ENCODE measurements at regions of chr17 and their contacts with region 1.

Region 1: GRCh38 chr17:41548844-41549595 is 20.9 kb upstream of the KRT19 start:
- DNase-seq: peak; percentile 72 to 90 (median 84)
- ATAC-seq: peak; percentile 87
- H3K4me3 ChIP-seq: peak overlapping the region; percentile 11 to 40
- H3K4me3 Mint-ChIP-seq: peak overlapping the region; percentile 54
- H3K27ac ChIP-seq: no peak overlapping the region
- H3K27ac Mint-ChIP-seq: no peak overlapping the region
- H3K4me1 ChIP-seq: peaks cover 14% of the 10 kb centered on the region
- H3K4me1 Mint-ChIP-seq: peaks cover 8% of the 10 kb centered on the region
- H3K27me3 ChIP-seq: no peaks in the 10 kb centered on the region
- H3K27me3 Mint-ChIP-seq: peaks cover 13% of the 10 kb centered on the region
- CTCF ChIP-seq: peak; percentile 82

Region 2: DNA sequence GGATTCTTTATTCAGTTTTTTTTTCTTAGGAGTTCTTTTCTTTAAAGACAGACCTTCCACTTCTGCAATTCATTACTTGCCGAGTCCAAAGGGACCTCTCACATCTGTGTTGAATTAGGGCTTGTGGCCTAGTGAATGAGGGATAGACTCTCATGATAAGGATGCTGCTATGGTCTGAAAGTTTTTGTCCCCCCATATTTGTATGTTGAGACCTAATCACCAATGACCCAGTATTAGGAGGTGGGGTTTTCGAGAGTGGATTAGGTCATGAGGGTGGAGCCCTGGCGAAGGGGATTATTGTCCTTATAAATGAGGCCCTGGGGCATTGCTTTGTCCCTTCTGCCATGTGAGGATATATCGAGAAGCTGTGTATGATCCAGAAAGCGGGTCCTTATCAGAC is 691.5 kb before region 1 on chr17:
- CTCF ChIA-PET with region 1: interaction called, 20 read pairs
- POLR2A ChIA-PET with region 1: no interaction called
- intact Hi-C with region 1: loop called (anchors 2 kb)
- DNase-seq: no peak
- ATAC-seq: no peak
- H3K4me3 ChIP-seq: no peak overlapping the region
- H3K4me3 Mint-ChIP-seq: no peak overlapping the region
- H3K27ac ChIP-seq: no peak overlapping the region
- H3K27ac Mint-ChIP-seq: no peak overlapping the region
- H3K4me1 ChIP-seq: no peaks in the 10 kb centered on the region
- H3K4me1 Mint-ChIP-seq: peaks cover 2% of the 10 kb centered on the region
- H3K27me3 ChIP-seq: no peaks in the 10 kb centered on the region
- H3K27me3 Mint-ChIP-seq: peaks cover 17% of the 10 kb centered on the region
- CTCF ChIP-seq: no peak

Region 3: GRCh38 chr17:40909351-40909750 is 639.7 kb before region 1 on chr17:
- CTCF ChIA-PET with region 1: interaction called, 59 read pairs
- POLR2A ChIA-PET with region 1: no interaction called
- intact Hi-C with region 1: loop called (anchors 1 kb)
- DNase-seq: peak; percentile 33 to 81 (median 66)
- ATAC-seq: peak; percentile 88
- H3K4me3 ChIP-seq: no peak overlapping the region
- H3K4me3 Mint-ChIP-seq: no peak overlapping the region
- H3K27ac ChIP-seq: no peak overlapping the region
- H3K27ac Mint-ChIP-seq: no peak overlapping the region
- H3K4me1 ChIP-seq: no peaks in the 10 kb centered on the region
- H3K4me1 Mint-ChIP-seq: no peaks in the 10 kb centered on the region
- H3K27me3 ChIP-seq: peaks cover 0 to 5% of the 10 kb centered on the region in 2 experiments
- H3K27me3 Mint-ChIP-seq: peaks cover 35% of the 10 kb centered on the region
- CTCF ChIP-seq: peak; percentile 82

Region 4: DNA sequence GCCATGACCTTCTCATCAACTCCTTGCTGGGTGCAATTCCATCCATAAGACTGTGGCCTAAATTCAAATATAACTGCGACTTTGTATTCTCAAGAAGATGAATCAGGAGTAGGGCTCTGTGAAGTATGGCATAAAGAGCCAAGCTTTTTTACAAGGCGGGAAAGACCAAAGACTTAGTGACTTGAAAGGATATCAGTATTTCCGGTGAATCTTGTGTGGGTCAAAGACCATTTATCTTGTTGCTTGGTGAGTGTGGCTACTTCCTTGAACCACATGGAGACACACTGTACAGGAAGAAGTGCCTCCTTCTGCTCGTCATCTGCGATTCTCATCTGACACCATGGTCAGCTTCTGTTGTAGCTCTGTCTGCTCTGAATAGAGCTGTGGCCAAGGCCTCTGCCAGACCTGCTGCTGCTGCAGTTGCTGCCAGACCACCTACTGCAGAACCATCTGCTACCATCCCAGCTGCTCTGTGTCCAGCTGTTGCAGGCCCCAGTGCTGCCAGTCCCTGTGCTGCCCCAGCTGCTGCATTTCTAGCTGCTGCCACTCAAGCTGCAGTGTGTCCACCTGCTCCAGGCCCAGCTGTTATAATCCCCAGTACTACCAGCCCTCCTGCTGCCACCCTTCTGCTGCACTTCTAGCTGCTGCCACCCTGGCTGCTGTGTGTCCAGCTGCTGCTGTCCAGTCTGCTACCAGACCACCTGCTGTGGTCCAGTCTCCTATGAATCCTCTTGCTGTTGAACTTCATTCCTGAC is 477.2 kb before region 1 on chr17:
- CTCF ChIA-PET with region 1: no interaction called
- POLR2A ChIA-PET with region 1: no interaction called
- intact Hi-C with region 1: loop called in 1 of 2 experiments (anchors 5 kb)
- DNase-seq: no peak
- ATAC-seq: no peak
- H3K4me3 ChIP-seq: no peak overlapping the region
- H3K4me3 Mint-ChIP-seq: no peak overlapping the region
- H3K27ac ChIP-seq: no peak overlapping the region
- H3K27ac Mint-ChIP-seq: no peak overlapping the region
- H3K4me1 ChIP-seq: no peaks in the 10 kb centered on the region
- H3K4me1 Mint-ChIP-seq: no peaks in the 10 kb centered on the region
- H3K27me3 ChIP-seq: peaks cover 0 to 3% of the 10 kb centered on the region in 2 experiments
- H3K27me3 Mint-ChIP-seq: peaks cover 20% of the 10 kb centered on the region
- CTCF ChIP-seq: no peak

Region 5: GRCh38 chr17:41301916-41302901 is 246.8 kb before region 1 on chr17 and contains the start of gene KRTAP29-1:
- CTCF ChIA-PET with region 1: no interaction called
- POLR2A ChIA-PET with region 1: no interaction called
- intact Hi-C with region 1: no loop called
- DNase-seq: no peak
- ATAC-seq: no peak
- H3K4me3 ChIP-seq: no peak within 1 kb of the TSS
- H3K4me3 Mint-ChIP-seq: no peak within 1 kb of the TSS
- H3K27ac ChIP-seq: no peak within 1 kb of the TSS
- H3K27ac Mint-ChIP-seq: no peak within 1 kb of the TSS
- H3K4me1 ChIP-seq: peaks cover 18% of the 10 kb centered on the region
- H3K4me1 Mint-ChIP-seq: peaks cover 43% of the 10 kb centered on the region
- H3K27me3 ChIP-seq: peaks cover 0 to 4% of the 10 kb centered on the region in 2 experiments
- H3K27me3 Mint-ChIP-seq: no peaks in the 10 kb centered on the region
- CTCF ChIP-seq: no peak
- total RNA-seq, gene KRTAP29-1: not detected

Region 6: GRCh38 chr17:41480136-41480535 is 68.9 kb before region 1 on chr17:
- CTCF ChIA-PET with region 1: no interaction called
- POLR2A ChIA-PET with region 1: no interaction called
- intact Hi-C with region 1: no loop called
- DNase-seq: no peak
- ATAC-seq: no peak
- H3K4me3 ChIP-seq: no peak overlapping the region
- H3K4me3 Mint-ChIP-seq: no peak overlapping the region
- H3K27ac ChIP-seq: no peak overlapping the region
- H3K27ac Mint-ChIP-seq: no peak overlapping the region
- H3K4me1 ChIP-seq: no peaks in the 10 kb centered on the region
- H3K4me1 Mint-ChIP-seq: no peaks in the 10 kb centered on the region
- H3K27me3 ChIP-seq: no peaks in the 10 kb centered on the region
- H3K27me3 Mint-ChIP-seq: no peaks in the 10 kb centered on the region
- CTCF ChIP-seq: no peak

Region 7: GRCh38 chr17:41530062-41531051 is 18.7 kb before region 1 on chr17:
- CTCF ChIA-PET with region 1: interaction called, 32 read pairs
- POLR2A ChIA-PET with region 1: no interaction called
- intact Hi-C with region 1: no loop called
- DNase-seq: no peak
- ATAC-seq: no peak
- H3K4me3 ChIP-seq: no peak overlapping the region
- H3K4me3 Mint-ChIP-seq: no peak overlapping the region
- H3K27ac ChIP-seq: no peak overlapping the region
- H3K27ac Mint-ChIP-seq: no peak overlapping the region
- H3K4me1 ChIP-seq: peaks cover 9% of the 10 kb centered on the region
- H3K4me1 Mint-ChIP-seq: peaks cover 20% of the 10 kb centered on the region
- H3K27me3 ChIP-seq: peaks cover 20 to 28% of the 10 kb centered on the region in 2 experiments
- H3K27me3 Mint-ChIP-seq: peaks cover 61% of the 10 kb centered on the region
- CTCF ChIP-seq: no peak

Region 8: DNA sequence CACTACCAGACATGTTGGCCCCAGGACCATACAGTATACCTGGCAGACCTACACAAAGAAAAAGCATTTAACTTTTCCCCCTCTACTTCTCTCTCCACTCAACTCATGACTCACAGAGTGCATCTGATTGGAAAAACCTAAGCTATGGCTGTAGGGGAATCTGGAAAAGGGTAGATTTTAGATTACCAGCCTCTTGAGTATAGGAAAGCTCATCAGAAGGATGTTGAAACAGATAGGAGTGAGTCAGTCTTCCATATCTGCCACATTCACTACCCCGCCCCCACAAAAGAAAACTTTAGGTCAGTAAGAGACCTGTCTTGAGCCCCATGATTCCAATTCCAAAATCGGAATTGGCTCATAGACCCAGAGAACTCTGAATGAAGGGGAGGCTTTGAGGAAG is 10.5 kb after region 1 on chr17:
- CTCF ChIA-PET with region 1: interaction called, 30 read pairs
- POLR2A ChIA-PET with region 1: no interaction called
- intact Hi-C with region 1: no loop called
- DNase-seq: no peak
- ATAC-seq: no peak
- H3K4me3 ChIP-seq: no peak overlapping the region
- H3K4me3 Mint-ChIP-seq: no peak overlapping the region
- H3K27ac ChIP-seq: no peak overlapping the region
- H3K27ac Mint-ChIP-seq: no peak overlapping the region
- H3K4me1 ChIP-seq: no peaks in the 10 kb centered on the region
- H3K4me1 Mint-ChIP-seq: no peaks in the 10 kb centered on the region
- H3K27me3 ChIP-seq: no peaks in the 10 kb centered on the region
- H3K27me3 Mint-ChIP-seq: peaks cover 53% of the 10 kb centered on the region
- CTCF ChIP-seq: no peak